ENCODE measurements at regions of chr9 and their contacts with region 1.

Region 1: DNA sequence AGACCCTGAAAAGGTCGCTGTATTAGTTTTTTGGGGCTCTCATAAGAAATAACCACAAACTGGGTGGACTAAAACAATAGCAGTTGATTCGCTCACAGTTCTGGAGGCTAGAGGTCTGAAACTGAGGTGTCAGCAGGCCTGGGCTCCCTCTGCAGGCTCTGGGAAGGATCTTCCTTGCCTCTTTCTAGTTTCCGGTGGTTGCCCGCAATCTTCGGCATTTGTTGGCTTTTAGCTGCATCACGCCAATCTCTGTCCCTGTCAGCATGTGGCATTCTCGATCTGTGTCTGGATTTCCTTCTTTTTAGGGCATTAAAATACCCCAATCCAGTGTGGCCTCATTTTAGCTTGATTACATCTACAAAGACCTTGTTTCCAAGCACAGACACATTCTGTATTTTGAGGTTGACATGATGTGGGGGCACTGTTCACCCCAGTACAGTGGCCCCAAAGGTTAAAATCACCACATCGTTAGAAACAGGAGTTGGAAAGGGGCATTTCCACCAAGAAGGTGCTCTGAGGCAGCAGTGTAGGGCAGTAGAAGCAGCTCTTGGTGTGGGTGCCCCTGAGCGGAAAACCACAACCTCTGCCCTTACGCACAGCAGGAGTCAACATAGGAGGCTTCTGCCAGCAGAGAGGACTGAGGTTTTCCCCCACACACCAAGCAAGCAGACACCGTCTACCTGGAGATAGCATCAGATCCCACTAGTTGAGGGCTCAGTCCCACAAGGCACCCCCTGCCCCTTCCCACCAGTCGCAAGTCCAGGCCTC is 13.5 kb downstream of the ZNF79 start:
- DNase-seq: no peak
- ATAC-seq: no peak
- H3K4me3 ChIP-seq: no peak overlapping the region
- H3K27ac ChIP-seq: no peak overlapping the region
- H3K4me1 ChIP-seq: no peaks in the 10 kb centered on the region
- H3K27me3 ChIP-seq: no peaks in the 10 kb centered on the region
- CTCF ChIP-seq: no peak

Region 2: GRCh38 chr9:128528445-128529160 is 1090.9 kb after region 1 on chr9:
- intact Hi-C with region 1: loop called in 1 of 10 experiments (anchors 5 kb)
- DNase-seq: no peak
- ATAC-seq: no peak
- H3K4me3 ChIP-seq: no peak overlapping the region
- H3K27ac ChIP-seq: no peak overlapping the region
- H3K4me1 ChIP-seq: peaks cover 0 to 2% (median 1%) of the 10 kb centered on the region in 9 donors
- H3K27me3 ChIP-seq: no peaks in the 10 kb centered on the region
- CTCF ChIP-seq: no peak

Measured in heart right ventricle (tissue), 16 donors.